Activated CD8-positive, alpha-beta memory T cell treated with anti-CD3 and anti-CD28 coated beads, Interleukin-2, amount 10 ng/mL, durations not matched to agents 7 days and 5 days (primary cell): ENCODE measurements at regions of chr4 and their contacts with region 1.

Region 1: GRCh38 chr4:147866532-147867271 is 134.8 kb downstream of the ARHGAP10 start:
- DNase-seq: peak; percentile 95
- ATAC-seq: peak; percentile 99
- H3K4me3 Mint-ChIP-seq: no peak overlapping the region
- H3K27ac Mint-ChIP-seq: no peak overlapping the region
- H3K4me1 Mint-ChIP-seq: peaks cover 10% of the 10 kb centered on the region
- H3K27me3 Mint-ChIP-seq: no peaks in the 10 kb centered on the region

Region 2: DNA sequence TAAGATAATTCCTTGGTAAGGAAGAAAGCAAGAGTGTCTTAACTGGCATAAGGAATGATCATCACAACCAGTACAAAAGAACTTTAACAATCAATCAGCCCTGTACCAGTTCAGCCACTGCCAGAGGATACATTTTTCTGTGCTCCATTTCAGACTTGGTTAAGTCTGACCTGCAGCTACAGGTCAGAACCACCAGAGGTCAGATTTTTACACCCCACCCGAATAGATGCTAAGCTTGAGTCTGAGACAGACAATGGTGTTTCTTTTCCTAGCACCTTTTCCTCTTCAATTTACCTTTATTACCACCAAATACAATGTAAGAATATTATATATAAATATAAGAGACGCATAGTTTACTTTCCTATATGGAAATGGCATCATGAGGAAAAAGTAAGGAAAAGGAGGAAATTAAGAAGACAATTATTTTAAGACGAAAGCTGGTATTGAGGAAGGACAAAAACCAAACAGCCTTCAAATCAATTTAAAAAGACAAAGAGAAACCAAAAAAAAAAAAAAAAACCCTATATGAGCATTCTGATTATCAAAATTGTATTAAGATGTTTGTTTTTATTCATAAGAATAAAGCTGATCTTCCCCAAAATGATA is 705.7 kb before region 1 on chr4:
- CTCF ChIA-PET with region 1: interaction called, 10 read pairs
- DNase-seq: no peak
- ATAC-seq: no peak
- H3K4me3 Mint-ChIP-seq: no peak overlapping the region
- H3K27ac Mint-ChIP-seq: no peak overlapping the region
- H3K4me1 Mint-ChIP-seq: peaks cover 2% of the 10 kb centered on the region
- H3K27me3 Mint-ChIP-seq: peaks cover 24% of the 10 kb centered on the region

Region 3: GRCh38 chr4:147617173-147617840 is 249.4 kb before region 1 on chr4 and contains the start of gene TMEM184C:
- CTCF ChIA-PET with region 1: interaction called, 60 read pairs
- DNase-seq: peak; percentile 99
- ATAC-seq: peak; percentile 99
- H3K4me3 Mint-ChIP-seq: peak within 1 kb of the TSS; percentile 95
- H3K27ac Mint-ChIP-seq: peak within 1 kb of the TSS; percentile 94
- H3K4me1 Mint-ChIP-seq: peaks cover 38% of the 10 kb centered on the region
- H3K27me3 Mint-ChIP-seq: peaks cover 15% of the 10 kb centered on the region
- total RNA-seq, gene TMEM184C: 18.5 to 27.2 TPM

Region 4: GRCh38 chr4:147696863-147697262 is 169.8 kb before region 1 on chr4:
- CTCF ChIA-PET with region 1: interaction called, 38 read pairs
- DNase-seq: no peak
- ATAC-seq: no peak
- H3K4me3 Mint-ChIP-seq: no peak overlapping the region
- H3K27ac Mint-ChIP-seq: no peak overlapping the region
- H3K4me1 Mint-ChIP-seq: no peaks in the 10 kb centered on the region
- H3K27me3 Mint-ChIP-seq: peaks cover 31% of the 10 kb centered on the region

Region 5: GRCh38 chr4:147731580-147732517 is 134.9 kb before region 1 on chr4 and contains the start of gene ARHGAP10:
- CTCF ChIA-PET with region 1: interaction called, 43 read pairs
- DNase-seq: peak; percentile 72
- ATAC-seq: peak; percentile 85
- H3K4me3 Mint-ChIP-seq: peak within 1 kb of the TSS; percentile 81
- H3K27ac Mint-ChIP-seq: peak within 1 kb of the TSS; percentile 84
- H3K4me1 Mint-ChIP-seq: peaks cover 49% of the 10 kb centered on the region
- H3K27me3 Mint-ChIP-seq: peaks cover 18% of the 10 kb centered on the region
- total RNA-seq, gene ARHGAP10: 12.1 to 18.8 TPM

Region 6: DNA sequence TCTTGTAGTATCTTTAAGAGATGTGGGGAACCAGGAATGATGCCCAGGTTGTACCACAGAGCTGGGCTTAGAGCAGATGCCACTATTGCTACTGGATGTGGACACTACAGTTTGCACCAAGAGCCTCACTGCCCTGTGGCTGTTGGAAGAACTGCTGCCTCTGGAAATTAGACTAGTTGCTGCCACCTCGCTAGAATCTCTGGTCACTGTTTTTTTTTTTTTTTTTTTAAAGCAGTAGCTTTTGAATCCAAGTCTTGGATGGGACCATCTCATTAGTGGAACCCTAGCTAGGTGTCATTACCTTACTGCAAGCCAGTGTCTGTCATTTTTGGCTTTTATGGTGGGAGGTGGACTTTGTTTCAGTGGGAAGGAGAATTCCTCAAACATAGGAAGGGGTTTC is 29.3 kb before region 1 on chr4:
- CTCF ChIA-PET with region 1: interaction called, 15 read pairs
- DNase-seq: no peak
- ATAC-seq: peak; percentile 49
- H3K4me3 Mint-ChIP-seq: no peak overlapping the region
- H3K27ac Mint-ChIP-seq: no peak overlapping the region
- H3K4me1 Mint-ChIP-seq: peaks cover 8% of the 10 kb centered on the region
- H3K27me3 Mint-ChIP-seq: peaks cover 6% of the 10 kb centered on the region